Activated naive CD4-positive, alpha-beta T cell treated with anti-CD3 and anti-CD28 coated beads for 36 hours (primary cell): ENCODE measurements at regions of chr7 and their contacts with region 1.

Region 1: DNA sequence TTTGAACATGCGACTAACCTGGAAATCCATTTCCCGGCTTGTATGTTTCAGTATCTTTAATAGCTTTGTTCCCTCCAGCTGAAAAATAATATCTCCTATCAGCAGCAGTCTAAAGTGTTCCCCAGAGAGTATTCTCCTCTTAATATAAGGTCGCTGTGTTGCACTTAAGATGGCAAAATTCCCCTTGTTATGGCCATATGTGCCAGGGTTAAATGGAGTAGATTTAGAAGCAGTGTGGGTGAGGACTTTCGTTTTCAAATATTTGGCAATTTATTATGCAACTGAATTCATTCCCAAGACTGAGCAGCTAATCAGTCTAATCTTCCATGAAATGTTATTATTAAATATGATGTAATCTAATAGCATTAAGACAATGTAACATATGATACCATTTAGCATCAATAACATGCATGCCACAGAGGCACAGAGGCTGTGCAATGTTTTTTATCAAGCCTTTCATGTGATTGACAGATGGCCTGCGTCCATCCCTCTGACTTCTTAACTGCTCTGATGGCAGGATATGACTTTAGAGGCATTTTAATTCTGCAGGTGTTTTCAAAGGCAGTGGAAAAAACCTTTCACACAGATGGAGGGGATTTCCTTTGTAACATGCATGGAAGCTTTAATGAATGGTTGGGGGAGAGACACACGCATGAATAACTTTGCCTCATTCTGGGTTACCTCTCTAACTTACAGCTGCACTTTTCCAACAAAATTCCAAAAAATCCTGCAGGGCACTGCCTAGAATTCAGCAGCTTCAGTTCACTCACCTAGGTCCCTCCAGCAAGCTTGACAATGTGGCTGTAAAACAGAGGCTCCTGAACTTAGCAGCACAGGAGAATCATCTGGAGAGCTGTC is 55.1 kb upstream of the ZPBP start:
- DNase-seq: peak; percentile 73
- H3K4me3 Mint-ChIP-seq: peak overlapping the region; percentile 34
- H3K27ac Mint-ChIP-seq: peak overlapping the region; percentile 91
- H3K4me1 Mint-ChIP-seq: peaks cover 91% of the 10 kb centered on the region
- H3K27me3 Mint-ChIP-seq: no peaks in the 10 kb centered on the region

Region 2: DNA sequence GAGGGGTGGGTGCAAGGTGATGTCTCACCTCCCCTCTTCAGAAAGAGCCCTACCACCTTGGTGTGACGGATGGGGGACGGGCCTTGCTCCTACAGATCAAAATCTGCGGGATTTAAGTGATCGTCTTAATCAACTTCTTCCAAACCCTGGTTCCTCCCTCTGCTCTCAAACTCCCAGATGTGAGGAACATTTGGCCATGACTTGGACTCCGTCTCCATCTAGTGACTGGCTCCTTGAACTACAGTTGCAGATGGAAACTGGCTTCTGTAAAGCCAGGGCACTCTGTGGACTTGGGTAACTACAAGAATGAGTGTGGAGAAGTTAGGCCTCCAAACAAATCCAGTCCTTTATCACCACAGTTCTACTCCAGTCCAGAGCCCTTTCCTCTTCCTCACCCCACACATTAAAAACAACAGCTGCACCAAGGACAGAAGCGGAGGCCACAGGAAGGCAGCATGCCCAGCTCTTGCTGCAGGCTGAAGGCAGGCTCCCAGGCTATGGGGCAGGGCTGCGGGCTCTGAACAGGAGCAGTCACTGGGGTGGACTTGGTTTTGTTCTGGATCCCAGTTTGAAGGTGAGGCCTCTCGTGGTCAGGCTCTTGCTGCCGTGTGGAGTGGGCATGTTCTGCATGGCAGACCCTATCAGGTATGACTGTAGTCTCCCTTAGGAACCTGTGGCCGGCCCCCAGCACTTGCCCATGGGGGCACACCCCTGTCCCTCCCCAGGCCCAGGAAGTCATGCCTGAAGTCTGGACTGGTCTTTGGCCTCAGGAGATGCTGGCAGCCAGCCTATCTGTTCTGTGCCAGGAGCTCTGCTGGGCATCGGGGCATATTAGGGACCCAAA is 295.3 kb before region 1 on chr7:
- CTCF ChIA-PET with region 1: no interaction called
- intact Hi-C with region 1: no loop called
- DNase-seq: peak; percentile 46
- H3K4me3 Mint-ChIP-seq: no peak overlapping the region
- H3K27ac Mint-ChIP-seq: no peak overlapping the region
- H3K4me1 Mint-ChIP-seq: no peaks in the 10 kb centered on the region
- H3K27me3 Mint-ChIP-seq: no peaks in the 10 kb centered on the region

Region 3: GRCh38 chr7:50125766-50126165 is 22.4 kb before region 1 on chr7:
- CTCF ChIA-PET with region 1: no interaction called
- intact Hi-C with region 1: no loop called
- DNase-seq: no peak
- H3K4me3 Mint-ChIP-seq: no peak overlapping the region
- H3K27ac Mint-ChIP-seq: no peak overlapping the region
- H3K4me1 Mint-ChIP-seq: no peaks in the 10 kb centered on the region
- H3K27me3 Mint-ChIP-seq: no peaks in the 10 kb centered on the region

Region 4: GRCh38 chr7:50397320-50397970 is 249.3 kb after region 1 on chr7:
- CTCF ChIA-PET with region 1: interaction called, 3 read pairs
- intact Hi-C with region 1: loop called (anchors 1 kb)
- DNase-seq: peak; percentile 60
- H3K4me3 Mint-ChIP-seq: no peak overlapping the region
- H3K27ac Mint-ChIP-seq: peak overlapping the region; percentile 78
- H3K4me1 Mint-ChIP-seq: peaks cover 81% of the 10 kb centered on the region
- H3K27me3 Mint-ChIP-seq: no peaks in the 10 kb centered on the region

Region 5: GRCh38 chr7:50679218-50680007 is 531.2 kb after region 1 on chr7:
- CTCF ChIA-PET with region 1: no interaction called
- intact Hi-C with region 1: loop called (anchors 1 kb)
- DNase-seq: no peak
- H3K4me3 Mint-ChIP-seq: no peak overlapping the region
- H3K27ac Mint-ChIP-seq: no peak overlapping the region
- H3K4me1 Mint-ChIP-seq: no peaks in the 10 kb centered on the region
- H3K27me3 Mint-ChIP-seq: no peaks in the 10 kb centered on the region